Activated T-helper 1 cell treated with anti-CD3 and anti-CD28 coated beads, Interleukin-12 subunit alpha, Interleukin-12 subunit beta, Interleukin-2, Interleukin-4 antibody, amounts not matched to agents 30 ng/mL and 10 ng/mL and 1 ng/mL, durations not matched to agents 14 hours and 24 hours and 36 hours (primary cell): ENCODE measurements at regions of chr1 and their contacts with region 1.

Region 1: DNA sequence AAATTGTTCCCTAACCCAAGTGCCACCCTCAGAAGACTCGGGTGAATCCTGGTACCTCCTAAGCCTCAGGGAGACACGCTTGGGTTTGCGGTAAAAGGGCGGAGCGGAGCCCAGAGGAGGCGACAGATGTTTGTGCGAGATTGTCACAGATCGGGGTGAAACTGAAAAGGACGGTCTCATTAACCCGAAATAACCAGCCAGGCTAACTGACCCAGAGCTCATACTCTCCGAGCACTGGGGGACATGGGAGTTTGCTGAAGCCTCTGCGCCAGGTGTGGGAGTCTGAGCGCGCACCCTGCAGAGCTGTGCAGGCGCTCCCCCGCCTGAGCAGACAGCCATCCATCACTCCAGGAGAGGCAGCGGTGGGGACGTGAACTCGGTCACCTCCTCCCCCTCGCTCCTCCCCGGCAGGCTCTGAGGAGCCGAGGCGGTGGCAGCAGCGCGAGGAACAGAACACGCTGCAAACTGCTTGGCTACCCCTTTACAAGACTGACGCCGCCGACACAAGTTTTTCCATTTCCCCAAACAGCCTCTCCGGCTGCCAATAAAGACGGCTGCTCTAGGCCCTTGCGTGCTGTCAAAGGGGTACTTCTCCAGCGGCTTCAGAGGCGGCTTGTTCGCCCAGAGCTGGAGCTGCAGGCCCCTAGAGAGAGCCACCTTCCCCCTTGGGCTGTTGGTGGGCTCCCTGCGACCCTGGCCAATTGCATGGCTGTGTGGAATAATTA is 43.5 kb downstream of the RRAGC start:
- DNase-seq: no peak
- H3K4me3 Mint-ChIP-seq: peak overlapping the region; percentile 7
- H3K27ac Mint-ChIP-seq: no peak overlapping the region
- H3K4me1 Mint-ChIP-seq: peaks cover 8% of the 10 kb centered on the region
- H3K27me3 Mint-ChIP-seq: peaks cover 66% of the 10 kb centered on the region

Region 2: GRCh38 chr1:36924282-36924811 is 1891.7 kb before region 1 on chr1:
- intact Hi-C with region 1: no loop called
- DNase-seq: peak; percentile 31
- H3K4me3 Mint-ChIP-seq: no peak overlapping the region
- H3K27ac Mint-ChIP-seq: no peak overlapping the region
- H3K4me1 Mint-ChIP-seq: no peaks in the 10 kb centered on the region
- H3K27me3 Mint-ChIP-seq: peaks cover 2% of the 10 kb centered on the region

Region 3: GRCh38 chr1:38046884-38047602 is 769.0 kb before region 1 on chr1:
- intact Hi-C with region 1: loop called (anchors 2 kb)
- DNase-seq: peak; percentile 60
- H3K4me3 Mint-ChIP-seq: peak overlapping the region; percentile 84
- H3K27ac Mint-ChIP-seq: no peak overlapping the region
- H3K4me1 Mint-ChIP-seq: no peaks in the 10 kb centered on the region
- H3K27me3 Mint-ChIP-seq: peaks cover 43% of the 10 kb centered on the region

Region 4: GRCh38 chr1:38875806-38876205 is 59.7 kb after region 1 on chr1:
- intact Hi-C with region 1: no loop called
- DNase-seq: no peak
- H3K4me3 Mint-ChIP-seq: no peak overlapping the region
- H3K27ac Mint-ChIP-seq: no peak overlapping the region
- H3K4me1 Mint-ChIP-seq: peaks cover 23% of the 10 kb centered on the region
- H3K27me3 Mint-ChIP-seq: no peaks in the 10 kb centered on the region